Psoas muscle (tissue), 8 donors: ENCODE measurements at regions of chr1 and their contacts with region 1.

Region 1: DNA sequence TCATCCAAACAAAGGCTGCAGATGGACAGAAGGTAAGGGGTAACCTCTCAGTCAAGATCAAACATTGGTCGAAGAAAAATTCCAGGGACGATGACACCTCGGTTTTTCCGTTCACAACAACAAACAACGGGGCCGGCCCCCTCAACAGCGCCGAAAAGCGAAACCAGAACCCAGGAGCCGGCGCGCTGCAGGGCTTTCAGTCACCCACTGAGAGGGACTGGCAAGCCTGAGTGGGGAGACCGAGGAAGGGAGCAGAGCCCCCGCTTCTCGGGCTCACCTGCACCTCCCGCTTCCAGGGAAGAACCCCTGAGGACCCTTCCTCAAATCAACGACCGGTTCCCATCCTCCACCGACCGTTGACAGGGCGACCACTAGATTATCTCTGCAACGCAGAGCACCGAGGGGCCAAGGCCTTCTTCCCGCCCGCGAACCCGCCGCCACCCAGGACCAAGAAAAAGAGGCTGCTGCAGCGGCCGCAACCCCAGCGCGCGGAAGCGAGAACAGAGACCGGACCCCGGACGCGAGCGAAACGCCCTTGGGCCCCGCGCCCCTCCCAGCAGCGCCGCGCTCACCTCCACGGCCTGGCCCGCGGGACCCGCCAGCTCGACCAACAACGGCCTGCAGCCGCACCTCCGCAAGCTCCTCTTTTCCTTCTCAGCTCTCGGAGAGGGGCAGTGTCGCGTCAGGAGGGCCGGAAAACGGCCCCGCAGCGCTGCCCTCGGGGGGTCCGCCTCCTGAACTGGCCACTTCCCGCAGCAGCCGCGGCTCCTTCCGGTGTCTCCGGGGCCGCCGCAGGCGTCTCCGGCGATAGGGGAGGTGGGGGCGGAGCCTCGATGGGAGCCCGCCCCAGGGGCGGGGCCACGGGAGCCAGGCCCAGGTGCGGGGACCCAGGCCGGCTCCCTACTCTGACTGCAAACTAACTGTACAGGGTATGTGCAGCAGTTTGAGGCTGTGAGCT is at the start of gene USP33:
- DNase-seq: peak; percentile 89 to 93
- ATAC-seq: peak; percentile 98 to 99 (median 98)
- H3K4me3 ChIP-seq: peak within 1 kb of the TSS; percentile 80
- H3K27ac ChIP-seq: peak within 1 kb of the TSS; percentile 87
- H3K4me1 ChIP-seq: peaks cover 31% of the 10 kb centered on the region
- H3K27me3 ChIP-seq: no peaks in the 10 kb centered on the region
- CTCF ChIP-seq: no peak
- total RNA-seq, gene USP33: 21.0 to 24.9 (median 23.4) TPM

Region 2: GRCh38 chr1:77347646-77348045 is 411.7 kb before region 1 on chr1:
- intact Hi-C with region 1: no loop called
- DNase-seq: no peak
- ATAC-seq: no peak
- H3K4me3 ChIP-seq: no peak overlapping the region
- H3K27ac ChIP-seq: no peak overlapping the region
- H3K4me1 ChIP-seq: no peaks in the 10 kb centered on the region
- H3K27me3 ChIP-seq: no peaks in the 10 kb centered on the region
- CTCF ChIP-seq: no peak

Region 3: DNA sequence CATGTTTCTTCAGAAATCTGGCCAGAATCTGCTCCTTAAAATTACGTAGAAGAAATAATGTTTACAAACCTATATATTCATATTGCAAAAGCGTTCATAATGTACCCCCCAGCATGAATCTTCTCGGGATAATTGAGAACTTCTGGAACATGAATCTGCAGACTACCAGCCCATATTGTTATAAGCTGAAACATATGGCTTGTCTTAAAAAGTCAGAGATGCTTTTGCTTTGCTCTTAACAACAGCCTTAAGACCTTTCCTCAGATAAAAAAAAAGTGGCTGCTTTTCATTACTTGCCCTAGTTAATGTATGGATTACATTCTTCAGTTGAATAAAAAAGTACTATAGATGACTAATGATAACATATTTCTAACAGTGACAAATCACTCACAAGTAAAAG is 61.9 kb before region 1 on chr1:
- intact Hi-C with region 1: no loop called
- DNase-seq: no peak
- ATAC-seq: no peak
- H3K4me3 ChIP-seq: no peak overlapping the region
- H3K27ac ChIP-seq: no peak overlapping the region
- H3K4me1 ChIP-seq: no peaks in the 10 kb centered on the region
- H3K27me3 ChIP-seq: no peaks in the 10 kb centered on the region
- CTCF ChIP-seq: no peak

Region 4: GRCh38 chr1:77779529-77780281 is 20.4 kb after region 1 on chr1 and contains the start of gene MIGA1:
- intact Hi-C with region 1: loop called in 1 of 2 experiments (anchors 2 kb)
- DNase-seq: peak; percentile 79 to 91
- ATAC-seq: peak; percentile 97 to 99 (median 98)
- H3K4me3 ChIP-seq: peak within 1 kb of the TSS; percentile 92
- H3K27ac ChIP-seq: peak within 1 kb of the TSS; percentile 79
- H3K4me1 ChIP-seq: peaks cover 21% of the 10 kb centered on the region
- H3K27me3 ChIP-seq: no peaks in the 10 kb centered on the region
- CTCF ChIP-seq: no peak
- total RNA-seq, gene MIGA1: 11.2 to 17.0 (median 14.0) TPM

Region 5: DNA sequence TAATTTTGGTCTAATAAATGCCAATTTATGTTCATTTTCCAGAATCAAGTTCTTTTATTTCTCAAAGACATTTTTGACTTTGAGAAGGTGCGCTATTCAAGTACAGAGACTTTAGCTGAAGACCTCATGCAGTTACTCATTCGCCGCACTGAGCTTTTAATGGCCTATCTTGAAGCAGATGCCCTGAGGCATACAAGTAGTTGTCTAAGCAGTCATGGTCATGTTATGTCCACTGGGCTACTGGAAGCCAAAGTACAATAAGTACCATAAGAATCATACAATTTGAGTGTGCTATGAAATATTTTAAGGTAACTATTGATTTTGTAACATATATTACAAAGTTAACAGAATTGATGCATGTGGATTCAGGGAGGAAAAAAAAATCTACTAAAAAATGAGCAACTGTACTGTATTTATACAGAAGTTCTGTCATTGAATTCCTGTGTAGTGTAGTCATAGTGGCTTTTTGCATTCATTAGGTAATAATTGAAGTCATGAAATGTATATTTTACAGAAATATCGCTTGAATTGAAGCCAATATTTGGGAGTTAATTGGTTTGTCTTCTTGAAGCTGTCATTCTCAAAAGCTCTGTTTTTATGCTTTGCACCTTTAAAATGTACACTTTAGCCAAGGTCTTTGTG is 115.6 kb after region 1 on chr1:
- intact Hi-C with region 1: no loop called
- DNase-seq: no peak
- ATAC-seq: no peak
- H3K4me3 ChIP-seq: no peak overlapping the region
- H3K27ac ChIP-seq: no peak overlapping the region
- H3K4me1 ChIP-seq: no peaks in the 10 kb centered on the region
- H3K27me3 ChIP-seq: no peaks in the 10 kb centered on the region
- CTCF ChIP-seq: no peak